Posterior vena cava (tissue), 2 donors: ENCODE measurements at regions of chr18 and their contacts with region 1.

Region 1: GRCh38 chr18:67408240-67408639 is 108.3 kb downstream of the DSEL start:
- DNase-seq: no peak

Region 2: GRCh38 chr18:67217551-67218166 is 190.6 kb before region 1 on chr18:
- intact Hi-C with region 1: no loop called
- DNase-seq: no peak

Region 3: DNA sequence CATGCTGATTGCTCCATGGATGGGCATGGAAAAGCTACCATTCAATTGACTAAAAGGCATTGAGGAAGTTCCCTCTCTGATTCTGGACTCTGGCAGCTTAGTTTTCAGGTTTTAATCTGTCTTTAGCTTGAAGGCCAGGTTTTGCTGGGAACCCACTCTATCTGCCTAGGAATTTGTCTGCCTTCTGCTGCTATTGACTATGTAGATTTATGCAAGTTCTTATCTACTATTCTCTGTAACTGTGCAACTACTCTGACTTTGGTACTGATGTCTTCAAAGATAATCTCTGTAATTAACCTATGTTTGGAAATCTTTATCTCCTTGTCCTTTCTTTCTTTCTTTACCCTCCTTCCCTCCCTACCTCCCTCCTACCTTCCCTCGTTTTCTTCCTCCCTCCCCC is 70.5 kb before region 1 on chr18:
- intact Hi-C with region 1: loop called in 1 of 2 experiments (anchors 2 kb)
- DNase-seq: no peak